ENCODE measurements at regions of chr9 and their contacts with region 1.

Region 1: DNA sequence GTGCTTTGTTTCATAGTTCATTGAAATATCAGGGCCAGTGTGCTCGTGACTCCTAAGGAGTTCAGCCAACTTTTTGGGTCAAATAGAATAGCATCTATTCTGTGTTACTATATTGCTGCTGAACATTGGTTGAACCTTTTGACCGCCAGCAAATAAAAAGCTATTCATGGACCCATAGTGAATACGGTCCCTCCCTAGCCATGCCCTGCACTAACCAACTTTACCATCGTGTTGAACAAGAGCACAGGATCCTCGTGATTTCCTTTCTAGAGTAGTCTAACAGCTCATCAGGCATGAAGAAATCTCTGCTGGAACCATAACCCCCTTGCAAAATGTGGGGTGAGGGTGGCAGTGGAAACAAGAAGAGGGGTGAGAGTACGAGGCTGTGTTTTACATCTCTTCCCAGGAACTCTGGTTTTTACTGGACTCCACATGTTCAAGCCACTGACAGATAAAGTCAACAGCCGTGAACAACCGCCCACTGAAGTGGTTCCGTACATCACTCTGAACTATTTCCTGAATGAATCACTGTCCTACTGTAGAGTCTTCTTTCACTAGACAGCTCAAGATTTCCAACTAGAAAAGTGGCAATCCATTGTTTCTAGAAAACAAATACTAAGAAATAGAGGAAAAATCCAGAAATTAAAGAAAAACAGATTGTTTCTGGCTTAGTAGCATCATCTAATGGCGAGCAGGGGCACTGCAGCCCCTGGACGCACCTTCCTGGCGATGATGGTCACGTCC is 70.1 kb upstream of the SPATA31E1 start:
- DNase-seq: peak in 1 of 2 experiments; percentile 20
- H3K4me3 ChIP-seq: no peak overlapping the region
- H3K4me3 Mint-ChIP-seq: no peak overlapping the region
- H3K27ac Mint-ChIP-seq: no peak overlapping the region
- H3K4me1 ChIP-seq: no peaks in the 10 kb centered on the region
- H3K4me1 Mint-ChIP-seq: no peaks in the 10 kb centered on the region
- H3K27me3 ChIP-seq: no peaks in the 10 kb centered on the region
- H3K27me3 Mint-ChIP-seq: no peaks in the 10 kb centered on the region
- CTCF ChIP-seq: peak; percentile 64 to 77

Region 2: DNA sequence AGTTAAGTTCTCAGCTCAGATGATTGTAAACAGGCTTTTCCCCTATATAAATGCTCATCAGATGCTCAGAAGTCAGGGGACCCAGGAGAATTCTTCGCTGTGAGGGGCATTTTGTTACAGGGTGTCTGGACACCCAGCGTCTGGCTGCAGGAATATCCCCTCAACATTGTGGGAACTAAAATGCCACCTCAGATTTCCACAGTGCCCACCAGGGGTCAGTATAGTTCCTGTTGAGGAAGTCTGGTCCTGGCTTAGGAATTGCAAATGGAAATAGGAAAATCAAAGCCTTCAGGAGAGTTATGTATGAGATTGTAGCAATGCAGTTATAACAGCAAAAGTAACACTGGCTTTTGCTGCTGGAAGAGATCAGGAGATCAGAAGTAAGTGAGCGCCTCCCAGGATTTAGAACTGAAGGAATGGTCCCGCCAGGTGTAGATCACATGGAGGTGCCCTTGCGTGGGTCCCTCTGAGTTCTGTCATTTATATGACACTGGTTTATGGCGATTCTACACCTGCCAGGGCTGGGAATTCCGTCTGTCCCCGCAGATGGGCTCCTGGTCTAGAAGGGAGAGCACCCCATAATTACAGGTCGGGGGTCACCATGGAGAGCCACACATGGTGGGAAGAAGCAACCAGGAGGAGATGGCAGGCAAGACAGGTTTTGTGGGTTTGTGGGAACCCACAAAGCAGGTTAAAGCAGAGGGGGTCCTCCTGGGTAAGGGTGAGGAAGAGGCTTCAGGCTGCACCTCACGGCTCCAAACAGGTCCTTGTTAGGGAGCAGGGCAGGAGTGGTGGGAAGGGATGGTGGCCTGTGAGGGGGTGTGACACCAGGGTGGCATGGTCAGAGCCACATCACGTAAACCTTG is 133.7 kb before region 1 on chr9:
- CTCF ChIA-PET with region 1: interaction called, 3 read pairs
- POLR2A ChIA-PET with region 1: no interaction called
- intact Hi-C with region 1: loop called (anchors 2 kb)
- DNase-seq: peak; percentile 46 to 63
- H3K4me3 ChIP-seq: no peak overlapping the region
- H3K4me3 Mint-ChIP-seq: no peak overlapping the region
- H3K27ac Mint-ChIP-seq: no peak overlapping the region
- H3K4me1 ChIP-seq: no peaks in the 10 kb centered on the region
- H3K4me1 Mint-ChIP-seq: no peaks in the 10 kb centered on the region
- H3K27me3 ChIP-seq: no peaks in the 10 kb centered on the region
- H3K27me3 Mint-ChIP-seq: no peaks in the 10 kb centered on the region
- CTCF ChIP-seq: peak; percentile 52 to 66

Region 3: DNA sequence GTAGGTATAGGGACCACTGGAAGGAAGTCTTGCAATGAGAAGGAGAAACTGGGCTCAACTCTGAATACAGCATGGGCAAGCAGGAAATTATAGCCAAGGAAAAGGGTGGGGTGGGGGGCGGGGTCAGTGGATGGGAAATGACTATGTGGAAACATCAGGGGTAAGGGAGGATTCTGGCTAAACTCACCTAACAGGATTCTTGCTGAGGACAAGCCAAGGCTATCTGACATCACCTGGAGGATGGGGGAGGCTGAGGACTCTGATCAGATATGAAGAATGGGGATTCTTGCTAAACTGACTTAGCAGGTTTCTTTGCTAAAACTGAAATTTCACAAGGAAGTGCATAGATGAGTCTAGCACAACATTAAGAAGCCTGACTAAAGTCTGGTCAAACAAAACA is 45.8 kb before region 1 on chr9:
- CTCF ChIA-PET with region 1: no interaction called
- POLR2A ChIA-PET with region 1: no interaction called
- intact Hi-C with region 1: loop called (anchors 5 kb)
- DNase-seq: peak; percentile 76 to 84
- H3K4me3 ChIP-seq: no peak overlapping the region
- H3K4me3 Mint-ChIP-seq: no peak overlapping the region
- H3K27ac Mint-ChIP-seq: no peak overlapping the region
- H3K4me1 ChIP-seq: 0 out of 2 replicates have a peak, but pooled peaks cover 5% of the 10 kb centered on the region
- H3K4me1 Mint-ChIP-seq: peaks cover 6% of the 10 kb centered on the region
- H3K27me3 ChIP-seq: no peaks in the 10 kb centered on the region
- H3K27me3 Mint-ChIP-seq: no peaks in the 10 kb centered on the region
- CTCF ChIP-seq: no peak

Region 4: GRCh38 chr9:87824216-87824875 is 11.8 kb after region 1 on chr9:
- CTCF ChIA-PET with region 1: no interaction called
- POLR2A ChIA-PET with region 1: no interaction called
- intact Hi-C with region 1: no loop called
- DNase-seq: no peak
- H3K4me3 ChIP-seq: no peak overlapping the region
- H3K4me3 Mint-ChIP-seq: no peak overlapping the region
- H3K27ac Mint-ChIP-seq: no peak overlapping the region
- H3K4me1 ChIP-seq: no peaks in the 10 kb centered on the region
- H3K4me1 Mint-ChIP-seq: no peaks in the 10 kb centered on the region
- H3K27me3 ChIP-seq: no peaks in the 10 kb centered on the region
- H3K27me3 Mint-ChIP-seq: no peaks in the 10 kb centered on the region
- CTCF ChIP-seq: no peak